Activated CD4-positive, alpha-beta memory T cell treated with anti-CD3 and anti-CD28 coated beads for 36 hours (primary cell): ENCODE measurements at regions of chr16 and their contacts with region 1.

Region 1: DNA sequence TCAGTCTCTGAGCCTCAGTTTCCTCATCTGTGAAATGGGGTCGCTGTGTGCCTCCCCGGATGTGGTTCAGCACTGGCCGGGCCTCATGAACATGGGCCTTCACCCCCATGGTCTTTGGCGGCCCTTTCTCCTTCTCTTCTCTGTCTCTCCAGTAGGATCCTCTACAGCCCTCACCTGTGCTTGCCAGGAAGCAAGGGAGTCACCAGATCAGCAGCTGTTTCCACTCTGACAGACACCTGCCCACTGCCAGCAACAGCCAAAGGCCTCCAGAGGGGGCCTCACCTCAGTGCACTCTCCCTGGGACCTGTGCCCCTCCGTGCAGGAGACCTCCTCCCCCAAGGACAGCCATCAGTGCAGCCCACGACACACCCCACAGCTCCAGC is 89.4 kb downstream of the C16orf78 start:
- DNase-seq: peak; percentile 12
- H3K4me3 Mint-ChIP-seq: no peak overlapping the region
- H3K27ac Mint-ChIP-seq: no peak overlapping the region
- H3K4me1 Mint-ChIP-seq: peaks cover 27% of the 10 kb centered on the region
- H3K27me3 Mint-ChIP-seq: no peaks in the 10 kb centered on the region

Region 2: GRCh38 chr16:49396206-49396725 is 66.7 kb before region 1 on chr16:
- CTCF ChIA-PET with region 1: no interaction called
- POLR2A ChIA-PET with region 1: no interaction called
- intact Hi-C with region 1: no loop called
- DNase-seq: no peak
- H3K4me3 Mint-ChIP-seq: no peak overlapping the region
- H3K27ac Mint-ChIP-seq: no peak overlapping the region
- H3K4me1 Mint-ChIP-seq: no peaks in the 10 kb centered on the region
- H3K27me3 Mint-ChIP-seq: peaks cover 13% of the 10 kb centered on the region

Region 3: DNA sequence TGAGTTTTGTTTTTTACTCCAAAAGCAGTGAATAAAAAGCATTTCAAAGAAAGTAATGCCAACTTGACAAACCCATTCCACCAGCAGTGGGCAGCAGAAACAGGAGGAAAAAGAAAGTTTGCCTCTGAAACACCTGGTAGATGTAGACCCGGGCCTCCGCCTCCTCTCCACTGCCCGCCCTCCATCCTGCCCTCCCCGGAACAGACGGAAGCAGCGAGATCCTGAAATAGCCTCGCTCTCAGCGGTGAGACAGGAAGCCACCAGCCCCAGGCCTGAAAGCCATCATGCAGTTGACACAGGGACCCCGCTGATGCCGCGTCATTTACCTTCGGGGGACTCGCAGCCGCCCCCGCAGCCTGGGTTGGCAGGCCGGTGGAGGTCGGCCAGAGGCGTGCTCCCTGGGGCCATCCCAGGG is 21.6 kb before region 1 on chr16:
- CTCF ChIA-PET with region 1: no interaction called
- POLR2A ChIA-PET with region 1: no interaction called
- intact Hi-C with region 1: loop called (anchors 1 kb)
- DNase-seq: peak; percentile 83
- H3K4me3 Mint-ChIP-seq: peak overlapping the region; percentile 21
- H3K27ac Mint-ChIP-seq: no peak overlapping the region
- H3K4me1 Mint-ChIP-seq: peaks cover 13% of the 10 kb centered on the region
- H3K27me3 Mint-ChIP-seq: no peaks in the 10 kb centered on the region